A549 (cell line): ENCODE measurements at regions of chr2 and their contacts with region 1.

Region 1: GRCh38 chr2:65056215-65057053 is at the start of gene CEP68:
- DNase-seq: peak; percentile 98 to 99
- ATAC-seq: peak; percentile 92 to 99
- H3K4me3 ChIP-seq: peak within 1 kb of the TSS; percentile 67
- H3K27ac ChIP-seq: peak within 1 kb of the TSS; percentile 81 to 93
- H3K4me1 ChIP-seq: peaks cover 16% of the 10 kb centered on the region
- CTCF ChIP-seq: no peak
- EP300 ChIP-seq: no peak
- POLR2A ChIP-seq: peak; percentile 97
- RAD21 ChIP-seq: no peak
- polyA plus RNA-seq, gene CEP68: 9.2 and 9.3 TPM in 2 replicates

Region 2: DNA sequence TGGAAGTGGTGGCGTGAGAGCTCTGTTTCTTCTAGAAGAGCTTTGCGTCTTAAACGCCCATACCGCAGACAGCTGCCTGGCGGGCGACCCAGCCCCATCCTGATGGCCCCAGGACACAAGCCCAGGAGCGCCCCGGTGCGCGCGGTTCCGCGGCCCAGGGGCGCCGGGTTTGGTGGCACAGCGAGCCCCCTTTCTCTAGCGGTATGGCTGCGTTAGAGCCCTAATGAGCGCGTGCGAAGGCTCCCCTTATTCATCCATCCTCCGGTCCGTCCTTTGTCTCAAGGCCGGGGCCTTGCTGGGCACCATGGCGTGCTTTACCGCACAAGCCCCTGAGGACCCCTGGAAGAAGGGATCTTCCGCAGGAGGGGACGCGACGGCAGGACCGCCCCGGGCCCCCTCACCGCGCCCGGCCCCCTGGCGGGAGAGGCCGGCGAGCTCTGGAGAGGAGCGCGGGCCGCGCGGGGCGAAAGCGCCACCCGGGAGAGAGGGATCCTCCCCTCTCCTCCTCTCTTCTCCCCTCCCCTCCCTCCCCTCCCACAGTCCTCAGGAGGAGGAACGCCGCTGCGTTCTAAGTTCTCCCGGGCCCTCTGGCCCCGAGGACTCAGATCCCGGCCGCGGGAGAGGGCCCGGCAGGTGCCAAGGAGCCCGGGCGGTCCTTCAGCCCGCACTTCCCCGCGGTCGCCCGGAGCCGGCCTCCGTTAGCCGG is 67.9 kb before region 1 on chr2:
- CTCF ChIA-PET with region 1: interaction called, 3 read pairs
- POLR2A ChIA-PET with region 1: interaction called, 13 read pairs
- DNase-seq: peak; percentile 89 to 90
- ATAC-seq: peak; percentile 89
- H3K4me3 ChIP-seq: peak overlapping the region; percentile 89
- H3K27ac ChIP-seq: peak overlapping the region; percentile 91 to 94
- H3K4me1 ChIP-seq: peaks cover 27% of the 10 kb centered on the region
- CTCF ChIP-seq: peak; percentile 55
- EP300 ChIP-seq: no peak
- POLR2A ChIP-seq: peak; percentile 35
- RAD21 ChIP-seq: peak in 1 of 2 experiments; percentile 44; a peak in 2 of 5 replicates

Region 3: GRCh38 chr2:65040400-65041261 is 15.8 kb before region 1 on chr2:
- CTCF ChIA-PET with region 1: interaction called, 23 read pairs
- POLR2A ChIA-PET with region 1: interaction called, 3 read pairs
- DNase-seq: peak; percentile 90
- ATAC-seq: peak; percentile 98 to 99
- H3K4me3 ChIP-seq: no peak overlapping the region
- H3K27ac ChIP-seq: peak overlapping the region in 1 of 2 experiments; percentile 59; a peak in 3 of 6 replicates
- H3K4me1 ChIP-seq: no peaks in the 10 kb centered on the region
- CTCF ChIP-seq: peak; percentile 96
- EP300 ChIP-seq: no peak
- POLR2A ChIP-seq: no peak
- RAD21 ChIP-seq: peak; percentile 96 to 98

Region 4: GRCh38 chr2:65045651-65046050 is 10.8 kb before region 1 on chr2:
- CTCF ChIA-PET with region 1: interaction called, 23 read pairs
- POLR2A ChIA-PET with region 1: interaction called, 3 read pairs
- DNase-seq: no peak
- ATAC-seq: no peak
- H3K4me3 ChIP-seq: no peak overlapping the region
- H3K27ac ChIP-seq: no peak overlapping the region
- H3K4me1 ChIP-seq: no peaks in the 10 kb centered on the region
- CTCF ChIP-seq: no peak
- EP300 ChIP-seq: no peak
- POLR2A ChIP-seq: no peak
- RAD21 ChIP-seq: no peak

Region 5: DNA sequence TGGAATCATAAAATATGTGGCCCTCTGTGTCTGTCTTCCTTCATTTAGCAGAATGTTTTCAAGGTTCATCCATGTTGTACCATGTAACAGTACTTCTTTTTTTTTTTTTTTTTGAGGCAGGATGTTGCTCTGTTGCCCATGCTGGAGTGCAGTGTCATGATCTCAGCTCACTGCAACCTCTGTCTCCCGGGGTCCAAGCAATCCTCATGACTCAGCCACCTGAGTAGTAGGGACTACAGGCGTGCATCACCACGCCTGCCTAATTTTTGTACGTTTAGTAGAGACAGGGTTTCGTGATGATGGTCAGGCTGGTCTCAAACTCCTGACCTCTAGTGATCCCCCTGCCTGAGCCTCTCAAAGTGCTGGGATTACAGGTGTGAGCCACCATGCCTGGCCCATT is 42.3 kb after region 1 on chr2:
- CTCF ChIA-PET with region 1: no interaction called
- POLR2A ChIA-PET with region 1: no interaction called
- DNase-seq: no peak
- ATAC-seq: peak in 1 of 2 experiments; percentile 41; a peak in 2 of 6 replicates
- H3K4me3 ChIP-seq: no peak overlapping the region
- H3K27ac ChIP-seq: no peak overlapping the region
- H3K4me1 ChIP-seq: peaks cover 5% of the 10 kb centered on the region; the same call in 1 of the 3 replicates
- CTCF ChIP-seq: no peak
- EP300 ChIP-seq: no peak
- POLR2A ChIP-seq: no peak
- RAD21 ChIP-seq: no peak

Region 6: DNA sequence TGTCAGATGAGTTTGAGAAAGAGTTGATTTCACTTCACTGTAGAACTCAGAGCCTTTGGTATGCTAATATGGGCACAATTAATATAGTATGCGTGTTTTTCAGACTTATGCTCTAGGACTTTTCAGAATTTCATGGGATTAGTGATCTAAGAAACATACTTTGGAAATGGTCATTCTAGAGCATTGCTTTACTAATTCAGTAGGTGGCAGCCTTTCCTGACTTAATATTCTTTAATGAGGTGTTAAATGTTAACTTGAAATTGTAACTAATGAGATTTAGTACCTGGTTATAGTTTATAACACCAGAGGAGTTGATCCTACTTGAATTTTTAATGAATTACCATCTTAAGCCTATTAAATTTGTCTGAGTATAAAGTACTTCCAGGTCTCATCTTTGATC is 199.6 kb after region 1 on chr2:
- CTCF ChIA-PET with region 1: no interaction called
- POLR2A ChIA-PET with region 1: no interaction called
- DNase-seq: no peak
- ATAC-seq: no peak; a peak in 1 of 6 replicates
- H3K4me3 ChIP-seq: no peak overlapping the region
- H3K27ac ChIP-seq: no peak overlapping the region
- H3K4me1 ChIP-seq: no peaks in the 10 kb centered on the region
- CTCF ChIP-seq: peak; percentile 52
- EP300 ChIP-seq: no peak
- POLR2A ChIP-seq: no peak
- RAD21 ChIP-seq: peak in 1 of 2 experiments; percentile 29; a peak in 1 of 5 replicates